ENCODE measurements at regions of chr15 and their contacts with region 1.

Region 1: DNA sequence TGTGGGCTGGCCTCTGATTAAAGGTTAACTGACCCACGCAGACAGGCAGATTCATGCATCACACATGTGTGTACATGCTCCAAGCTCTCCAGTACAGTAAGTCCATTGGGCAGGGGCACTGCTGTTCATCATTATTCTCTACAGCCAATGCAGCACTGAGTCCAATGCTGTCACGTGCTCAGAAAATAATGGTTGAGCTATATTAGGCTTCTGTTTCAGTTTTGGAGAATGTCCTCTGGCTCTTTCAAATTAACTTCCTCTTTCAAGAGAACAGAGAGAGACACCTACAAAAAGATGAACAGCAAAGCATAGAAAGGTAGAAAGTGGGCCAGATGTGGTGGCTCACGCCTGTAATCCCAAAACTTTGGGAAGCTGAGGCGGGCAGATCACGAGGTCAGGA is 202.6 kb downstream of the MEX3B start:
- DNase-seq: no peak
- ATAC-seq: no peak
- H3K4me3 ChIP-seq: no peak overlapping the region
- H3K27ac ChIP-seq: no peak overlapping the region
- H3K4me1 ChIP-seq: no peaks in the 10 kb centered on the region
- H3K27me3 ChIP-seq: no peaks in the 10 kb centered on the region
- CTCF ChIP-seq: no peak
- POLR2A ChIP-seq: no peak
- RAD21 ChIP-seq: no peak

Region 2: GRCh38 chr15:81625896-81626295 is 217.3 kb before region 1 on chr15:
- CTCF ChIA-PET with region 1: no interaction called
- POLR2A ChIA-PET with region 1: interaction called, 13 read pairs
- dilution Hi-C with region 1: no loop called
- in situ Hi-C with region 1: no loop called
- intact Hi-C with region 1: no loop called
- DNase-seq: no peak
- ATAC-seq: no peak
- H3K4me3 ChIP-seq: no peak overlapping the region
- H3K27ac ChIP-seq: no peak overlapping the region
- H3K4me1 ChIP-seq: no peaks in the 10 kb centered on the region
- H3K27me3 ChIP-seq: no peaks in the 10 kb centered on the region
- CTCF ChIP-seq: no peak
- POLR2A ChIP-seq: no peak
- RAD21 ChIP-seq: no peak

Region 3: DNA sequence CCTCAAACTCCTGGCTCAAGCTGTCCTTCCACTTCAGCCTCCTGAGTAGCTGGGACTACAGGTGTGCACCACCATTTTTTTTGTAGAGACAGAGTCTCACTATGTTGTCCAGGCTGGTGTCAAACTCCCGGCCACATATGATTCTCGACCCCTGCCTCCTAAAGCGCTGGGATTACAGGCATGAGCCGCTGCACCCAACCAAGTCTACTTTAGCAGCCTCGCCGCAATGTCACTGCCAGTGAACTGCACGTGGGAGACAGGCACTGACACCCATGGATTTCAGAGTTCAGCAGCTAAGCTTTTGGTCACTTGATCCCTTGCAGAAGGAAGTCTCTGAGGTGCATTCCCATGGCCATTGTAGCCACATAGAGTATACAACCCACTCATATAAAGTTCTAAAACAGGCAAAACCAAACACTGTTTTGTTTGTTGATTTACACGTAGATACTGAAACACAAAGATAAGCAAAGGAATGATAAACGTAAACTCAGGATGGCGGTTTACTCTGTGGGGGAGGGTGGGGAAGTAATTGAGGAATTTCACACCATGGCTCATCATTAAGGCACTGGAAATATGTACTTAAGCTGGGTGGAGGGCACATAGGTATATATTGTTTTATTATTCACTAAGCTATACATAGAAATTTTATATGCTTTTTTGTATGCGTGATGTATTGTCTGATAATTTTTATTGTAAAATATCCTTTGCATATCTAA is 87.6 kb after region 1 on chr15:
- CTCF ChIA-PET with region 1: no interaction called
- POLR2A ChIA-PET with region 1: no interaction called
- dilution Hi-C with region 1: no loop called
- in situ Hi-C with region 1: no loop called
- intact Hi-C with region 1: loop called (anchors 5 kb)
- DNase-seq: no peak
- ATAC-seq: no peak
- H3K4me3 ChIP-seq: no peak overlapping the region
- H3K27ac ChIP-seq: no peak overlapping the region
- H3K4me1 ChIP-seq: no peaks in the 10 kb centered on the region; the same call in 1 of the 2 replicates
- H3K27me3 ChIP-seq: no peaks in the 10 kb centered on the region
- CTCF ChIP-seq: no peak
- POLR2A ChIP-seq: no peak
- RAD21 ChIP-seq: no peak

Measured in IMR-90 (cell line).